ENCODE measurements at regions of chr9 and their contacts with region 1.

Region 1: GRCh38 chr9:109320742-109321448 is at the start of gene EPB41L4B:
- DNase-seq: peak; percentile 73
- ATAC-seq: peak; percentile 79
- H3K4me3 ChIP-seq: peak within 1 kb of the TSS; percentile 62 to 71
- H3K27ac ChIP-seq: peak within 1 kb of the TSS; percentile 43; the same call in 1 of the 2 replicates
- H3K4me1 ChIP-seq: peaks cover 20 to 45% of the 10 kb centered on the region in 2 experiments
- H3K27me3 ChIP-seq: no peaks in the 10 kb centered on the region
- CTCF ChIP-seq: peak in 2 of 3 experiments; percentile 87 to 91; a peak in 4 of 6 replicates
- POLR2A ChIP-seq: no peak
- RAD21 ChIP-seq: no peak
- total RNA-seq, gene EPB41L4B: 8.1 TPM

Region 2: DNA sequence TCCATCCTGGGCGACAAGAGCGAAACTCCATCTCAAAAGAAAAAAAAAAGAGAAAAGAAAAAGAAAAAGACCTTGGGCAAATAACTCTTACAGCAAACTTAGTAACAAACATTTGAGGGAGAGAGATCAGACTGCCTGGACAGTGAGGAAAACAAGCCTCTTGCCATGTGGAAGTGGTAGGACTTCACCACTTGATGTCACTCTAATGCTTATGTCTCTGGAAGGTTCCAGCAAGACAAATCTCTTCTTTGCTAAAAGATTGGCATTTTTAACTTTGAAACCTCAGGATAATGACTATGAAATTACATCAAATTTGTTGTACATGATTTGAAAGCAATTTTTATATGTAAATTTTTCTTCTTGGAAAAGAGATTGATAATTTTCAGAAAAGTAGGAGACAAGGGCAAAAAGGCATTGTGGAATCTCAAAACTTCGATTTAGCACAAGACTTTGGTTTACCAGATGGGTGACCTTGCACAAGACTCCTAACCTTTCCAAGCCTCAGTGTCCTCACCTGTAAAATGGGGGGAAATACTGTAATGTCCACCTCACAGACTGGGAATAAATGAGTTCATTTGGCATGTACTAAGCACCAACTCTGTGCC is 470.5 kb before region 1 on chr9:
- CTCF ChIA-PET with region 1: no interaction called
- POLR2A ChIA-PET with region 1: no interaction called
- RAD21 ChIA-PET with region 1: no interaction called
- intact Hi-C with region 1: loop called (anchors 10 kb)
- DNase-seq: peak; percentile 10
- ATAC-seq: peak; percentile 67
- H3K4me3 ChIP-seq: no peak overlapping the region
- H3K27ac ChIP-seq: no peak overlapping the region
- H3K4me1 ChIP-seq: no peaks in the 10 kb centered on the region
- H3K27me3 ChIP-seq: no peaks in the 10 kb centered on the region
- CTCF ChIP-seq: peak; percentile 39 to 50 (median 44); a peak in 3 of 6 replicates
- POLR2A ChIP-seq: no peak
- RAD21 ChIP-seq: peak; percentile 77

Region 3: DNA sequence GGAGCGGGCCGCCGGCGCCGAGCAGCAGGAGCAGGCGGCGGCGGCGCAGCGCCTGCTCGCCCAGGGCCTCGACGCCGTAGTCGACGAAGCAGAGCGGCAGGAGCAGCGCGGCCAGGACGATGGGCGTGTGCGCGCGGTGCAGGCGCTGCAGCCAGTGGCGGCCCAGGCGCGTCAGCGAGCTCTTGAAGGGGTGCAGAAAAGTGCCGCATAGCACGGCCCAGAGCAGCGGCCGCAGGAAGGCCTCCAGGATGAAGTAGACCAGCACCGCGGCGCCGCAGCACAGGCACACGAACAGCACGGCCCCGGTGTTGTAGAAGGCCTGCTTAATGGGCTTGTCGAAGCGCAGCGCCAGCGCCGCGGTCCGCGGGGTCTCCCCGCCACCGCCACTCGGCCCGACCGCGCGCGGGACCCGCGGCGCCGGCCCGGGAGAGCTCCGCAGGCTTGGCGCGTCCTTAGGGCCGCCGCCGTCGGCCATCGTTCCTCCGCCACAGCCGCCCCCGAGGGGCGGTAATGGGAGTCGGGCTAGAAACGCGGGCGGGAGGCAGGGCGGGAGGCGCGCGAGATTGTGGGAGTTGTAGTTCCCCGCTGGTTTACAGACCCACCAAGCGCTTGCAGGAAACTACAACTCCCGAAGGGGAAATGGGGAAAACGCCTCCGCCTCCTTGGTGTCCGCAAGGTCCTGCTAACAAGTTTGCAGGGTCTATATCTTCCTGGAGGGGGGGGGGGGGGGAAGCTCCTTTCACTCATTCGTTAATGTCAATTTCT is 201.3 kb before region 1 on chr9 and contains the start of gene TMEM245:
- CTCF ChIA-PET with region 1: no interaction called
- POLR2A ChIA-PET with region 1: no interaction called
- RAD21 ChIA-PET with region 1: no interaction called
- intact Hi-C with region 1: loop called (anchors 2 kb)
- DNase-seq: peak; percentile 99
- ATAC-seq: peak; percentile 94
- H3K4me3 ChIP-seq: peak within 1 kb of the TSS; percentile 70 to 93
- H3K27ac ChIP-seq: peak within 1 kb of the TSS; percentile 87
- H3K4me1 ChIP-seq: peaks cover 15 to 31% of the 10 kb centered on the region in 2 experiments
- H3K27me3 ChIP-seq: no peaks in the 10 kb centered on the region
- CTCF ChIP-seq: no peak
- POLR2A ChIP-seq: peak; percentile 56
- RAD21 ChIP-seq: no peak
- total RNA-seq, gene TMEM245: 34.8 TPM

Region 4: GRCh38 chr9:109192732-109193361 is 128.0 kb before region 1 on chr9:
- CTCF ChIA-PET with region 1: interaction called, 9 read pairs
- POLR2A ChIA-PET with region 1: no interaction called
- RAD21 ChIA-PET with region 1: no interaction called
- intact Hi-C with region 1: loop called (anchors 1 kb)
- DNase-seq: peak; percentile 15
- ATAC-seq: peak; percentile 81
- H3K4me3 ChIP-seq: no peak overlapping the region
- H3K27ac ChIP-seq: no peak overlapping the region
- H3K4me1 ChIP-seq: no peaks in the 10 kb centered on the region
- H3K27me3 ChIP-seq: no peaks in the 10 kb centered on the region
- CTCF ChIP-seq: peak; percentile 61 to 69 (median 61); a peak in 5 of 6 replicates
- POLR2A ChIP-seq: no peak
- RAD21 ChIP-seq: peak; percentile 83

Region 5: GRCh38 chr9:109244157-109245132 is 76.5 kb before region 1 on chr9:
- CTCF ChIA-PET with region 1: no interaction called
- POLR2A ChIA-PET with region 1: no interaction called
- RAD21 ChIA-PET with region 1: no interaction called
- intact Hi-C with region 1: loop called (anchors 1 kb)
- DNase-seq: peak; percentile 52
- ATAC-seq: peak; percentile 95
- H3K4me3 ChIP-seq: no peak overlapping the region
- H3K27ac ChIP-seq: no peak overlapping the region
- H3K4me1 ChIP-seq: no peaks in the 10 kb centered on the region
- H3K27me3 ChIP-seq: no peaks in the 10 kb centered on the region
- CTCF ChIP-seq: peak; percentile 64 to 96 (median 91); a peak in 5 of 6 replicates
- POLR2A ChIP-seq: no peak
- RAD21 ChIP-seq: peak; percentile 75

Region 6: DNA sequence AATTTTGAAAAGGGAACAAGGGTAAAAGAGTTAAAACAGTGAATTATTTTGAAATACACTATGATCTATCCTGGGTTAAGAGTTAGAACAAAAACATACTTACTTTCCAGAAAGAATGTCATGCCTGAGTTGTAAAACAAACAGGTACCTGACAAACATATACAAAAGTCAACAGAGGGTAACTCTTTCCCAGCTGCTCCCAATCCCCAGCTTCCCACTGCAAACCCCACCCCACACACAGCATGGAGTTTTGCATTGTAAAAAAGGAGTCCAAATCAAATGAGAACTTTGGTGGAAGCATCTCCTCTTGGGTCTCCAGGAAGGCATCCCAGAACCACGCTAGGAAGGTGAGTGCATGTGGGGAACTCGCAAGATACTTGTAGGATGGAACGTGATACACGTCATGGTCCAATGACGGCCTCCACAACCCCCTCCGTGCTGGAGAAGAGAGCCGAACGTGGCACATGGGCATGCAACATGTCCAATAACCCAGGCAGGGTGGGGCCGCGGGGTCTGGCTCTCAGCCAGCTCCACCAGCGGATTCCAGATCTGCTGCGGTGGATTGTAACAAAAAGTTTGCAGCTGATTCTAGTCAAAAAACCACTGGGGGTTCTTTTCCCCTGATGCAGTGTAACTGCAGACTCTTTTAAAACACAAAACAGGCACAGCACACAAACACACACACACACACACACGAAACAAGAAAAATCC is 55.9 kb before region 1 on chr9:
- CTCF ChIA-PET with region 1: no interaction called
- POLR2A ChIA-PET with region 1: no interaction called
- RAD21 ChIA-PET with region 1: no interaction called
- intact Hi-C with region 1: no loop called
- DNase-seq: no peak
- ATAC-seq: no peak
- H3K4me3 ChIP-seq: no peak overlapping the region
- H3K27ac ChIP-seq: no peak overlapping the region
- H3K4me1 ChIP-seq: no peaks in the 10 kb centered on the region
- H3K27me3 ChIP-seq: no peaks in the 10 kb centered on the region
- CTCF ChIP-seq: no peak
- POLR2A ChIP-seq: no peak
- RAD21 ChIP-seq: no peak